PC-3 (cell line): ENCODE measurements at regions of chr12 and their contacts with region 1.

Region 1: GRCh38 chr12:47819896-47820630 is at the start of gene HDAC7:
- DNase-seq: peak; percentile 81
- ATAC-seq: peak; percentile 66
- H3K4me3 ChIP-seq: peak within 1 kb of the TSS; percentile 86
- H3K27ac ChIP-seq: peak within 1 kb of the TSS; percentile 92
- H3K4me1 ChIP-seq: peaks cover 72% of the 10 kb centered on the region
- H3K27me3 ChIP-seq: no peaks in the 10 kb centered on the region
- CTCF ChIP-seq: no peak
- total RNA-seq, gene HDAC7: 44.2 and 59.6 TPM in 2 replicates

Region 2: GRCh38 chr12:46627686-46628085 is 1192.4 kb before region 1 on chr12:
- CTCF ChIA-PET with region 1: no interaction called
- POLR2A ChIA-PET with region 1: interaction called, 16 read pairs
- intact Hi-C with region 1: no loop called
- DNase-seq: no peak
- ATAC-seq: no peak
- H3K4me3 ChIP-seq: no peak overlapping the region
- H3K27ac ChIP-seq: no peak overlapping the region
- H3K4me1 ChIP-seq: no peaks in the 10 kb centered on the region
- H3K27me3 ChIP-seq: no peaks in the 10 kb centered on the region
- CTCF ChIP-seq: no peak

Region 3: GRCh38 chr12:47949441-47950308 is 129.6 kb after region 1 on chr12:
- CTCF ChIA-PET with region 1: no interaction called
- POLR2A ChIA-PET with region 1: interaction called, 4 read pairs
- intact Hi-C with region 1: loop called (anchors 10 kb)
- DNase-seq: peak; percentile 86
- ATAC-seq: peak; percentile 96
- H3K4me3 ChIP-seq: no peak overlapping the region
- H3K27ac ChIP-seq: no peak overlapping the region
- H3K4me1 ChIP-seq: peaks cover 7% of the 10 kb centered on the region; the same call in 1 of the 2 replicates
- H3K27me3 ChIP-seq: no peaks in the 10 kb centered on the region
- CTCF ChIP-seq: peak; percentile 89